Body of pancreas (tissue), 4 donors: ENCODE measurements at regions of chr7 and their contacts with region 1.

Region 1: DNA sequence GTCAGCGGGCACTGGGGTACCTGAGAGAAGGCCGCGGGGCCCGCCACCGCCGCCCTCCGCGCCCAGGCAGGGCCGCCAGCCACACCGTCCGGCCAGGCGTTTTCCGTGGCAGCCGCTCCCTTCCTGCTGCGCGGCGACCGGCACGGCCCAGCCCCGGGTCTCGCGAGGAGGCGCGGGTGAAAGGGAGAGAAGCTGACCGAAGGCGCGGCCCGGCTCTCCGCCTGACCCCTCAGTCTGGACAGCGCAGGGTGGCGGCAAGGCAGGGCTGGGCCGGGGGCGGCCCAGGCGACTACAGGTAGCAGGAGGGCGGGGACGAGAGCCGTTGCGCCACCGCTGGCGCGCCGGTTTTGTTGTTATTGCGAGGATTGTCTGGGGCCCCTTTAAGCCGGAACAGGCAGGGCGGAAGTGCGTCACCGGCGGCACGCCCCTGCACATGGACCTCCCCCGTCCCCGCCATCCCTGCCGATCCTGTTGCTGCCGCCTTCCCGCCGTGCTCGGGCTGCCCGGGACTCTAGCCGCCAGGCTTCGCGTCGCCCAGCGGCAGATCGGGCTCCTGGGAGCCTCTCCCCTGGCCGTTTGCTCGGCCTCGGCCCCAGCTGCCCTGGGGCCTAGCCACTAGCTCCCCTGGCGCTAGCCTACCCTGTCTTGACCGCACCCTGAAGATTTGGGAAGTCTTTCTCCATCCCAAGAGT is at the start of gene HERPUD2:
- DNase-seq: peak; percentile 94 to 97 (median 96)
- ATAC-seq: peak; percentile 95
- H3K4me3 ChIP-seq: peak within 1 kb of the TSS; percentile 86 to 95
- H3K27ac ChIP-seq: peak within 1 kb of the TSS; percentile 87 to 97 (median 93)
- H3K4me1 ChIP-seq: peaks cover 50% of the 10 kb centered on the region
- H3K27me3 ChIP-seq: no peaks in the 10 kb centered on the region
- CTCF ChIP-seq: no peak
- POLR2A ChIP-seq: peak; percentile 93 to 95 (median 93)
- total RNA-seq, gene HERPUD2: 19.4 to 21.5 TPM

Region 2: GRCh38 chr7:35424869-35425495 is 269.9 kb before region 1 on chr7:
- intact Hi-C with region 1: no loop called
- DNase-seq: peak; percentile 61 to 78 (median 68)
- ATAC-seq: peak; percentile 63
- H3K4me3 ChIP-seq: no peak overlapping the region
- H3K27ac ChIP-seq: no peak overlapping the region
- H3K4me1 ChIP-seq: no peaks in the 10 kb centered on the region
- H3K27me3 ChIP-seq: no peaks in the 10 kb centered on the region
- CTCF ChIP-seq: peak; percentile 28 to 95 (median 86)
- POLR2A ChIP-seq: no peak

Region 3: GRCh38 chr7:35630024-35630972 is 64.6 kb before region 1 on chr7:
- intact Hi-C with region 1: no loop called
- DNase-seq: no peak
- ATAC-seq: no peak
- H3K4me3 ChIP-seq: no peak overlapping the region
- H3K27ac ChIP-seq: no peak overlapping the region
- H3K4me1 ChIP-seq: no peaks in the 10 kb centered on the region
- H3K27me3 ChIP-seq: no peaks in the 10 kb centered on the region
- CTCF ChIP-seq: no peak
- POLR2A ChIP-seq: no peak

Region 4: GRCh38 chr7:35801392-35802101 is 106.6 kb after region 1 on chr7:
- intact Hi-C with region 1: loop called (anchors 10 kb)
- DNase-seq: peak; percentile 62 to 70 (median 67)
- ATAC-seq: peak; percentile 31
- H3K4me3 ChIP-seq: peak overlapping the region; percentile 47 to 88
- H3K27ac ChIP-seq: peak overlapping the region; percentile 91 to 97 (median 93)
- H3K4me1 ChIP-seq: peaks cover 25% of the 10 kb centered on the region
- H3K27me3 ChIP-seq: no peaks in the 10 kb centered on the region
- CTCF ChIP-seq: peak; percentile 23 to 67 (median 46)
- POLR2A ChIP-seq: no peak